Lower lobe of right lung (tissue), 2 donors: ENCODE measurements at regions of chr15 and their contacts with region 1.

Region 1: GRCh38 chr15:29749365-29750086 is 72.7 kb downstream of the TJP1 start:
- DNase-seq: no peak
- ATAC-seq: peak in 1 of 2 donors; percentile 50
- H3K4me3 ChIP-seq: no peak overlapping the region
- H3K27ac ChIP-seq: no peak overlapping the region
- H3K4me1 ChIP-seq: no peaks in the 10 kb centered on the region
- H3K27me3 ChIP-seq: no peaks in the 10 kb centered on the region
- CTCF ChIP-seq: no peak

Region 2: DNA sequence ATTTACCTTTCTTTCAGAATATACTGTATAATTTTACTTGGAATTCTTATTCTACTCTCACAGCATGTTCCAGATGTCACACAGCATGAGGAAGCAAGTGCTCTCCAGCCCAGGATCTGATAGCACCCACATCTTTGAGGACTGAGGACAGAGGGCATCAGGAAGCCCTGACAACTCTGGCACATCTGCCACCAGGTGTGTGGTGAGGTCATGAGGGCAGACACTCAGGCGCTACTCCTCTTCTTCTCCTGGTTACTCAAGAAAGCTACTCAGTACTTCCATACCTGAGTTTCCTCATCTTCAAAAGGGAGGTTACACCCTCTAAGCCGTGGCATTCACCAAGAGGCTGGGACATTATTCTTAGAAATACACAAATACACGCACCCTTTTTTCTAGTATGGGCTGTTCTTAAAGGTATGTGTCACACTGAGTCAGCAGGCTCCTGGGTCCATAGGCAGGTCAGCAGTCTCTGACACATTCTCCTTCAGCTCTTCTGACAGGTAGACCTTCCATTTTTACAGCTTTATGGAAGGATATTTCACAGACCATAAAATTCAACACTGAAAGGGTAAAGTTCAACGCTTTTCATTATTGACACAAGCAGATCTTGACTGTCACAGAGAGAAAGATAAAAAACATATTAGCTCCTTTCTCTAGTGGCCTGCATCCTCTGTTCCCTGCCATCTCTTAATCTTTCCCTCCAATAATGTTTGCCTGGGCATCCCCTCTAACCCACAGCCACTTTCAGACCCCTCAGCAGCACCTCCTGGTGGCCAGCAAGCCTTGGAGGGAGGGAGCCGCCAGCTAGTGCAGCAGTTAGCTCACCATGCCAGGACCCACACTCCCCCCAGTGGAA is 175.9 kb after region 1 on chr15:
- intact Hi-C with region 1: loop called (anchors 10 kb)
- DNase-seq: peak; percentile 51
- ATAC-seq: peak; percentile 75 to 76
- H3K4me3 ChIP-seq: no peak overlapping the region
- H3K27ac ChIP-seq: peak overlapping the region; percentile 55
- H3K4me1 ChIP-seq: peaks cover 13% of the 10 kb centered on the region
- H3K27me3 ChIP-seq: no peaks in the 10 kb centered on the region
- CTCF ChIP-seq: peak; percentile 73